ENCODE measurements at regions of chr10 and their contacts with region 1.

Region 1: GRCh38 chr10:51389415-51390321 is 309.7 kb downstream of the CSTF2T start:
- DNase-seq: peak in 6 of 10 donors; percentile 23 to 91 (median 60)

Region 2: DNA sequence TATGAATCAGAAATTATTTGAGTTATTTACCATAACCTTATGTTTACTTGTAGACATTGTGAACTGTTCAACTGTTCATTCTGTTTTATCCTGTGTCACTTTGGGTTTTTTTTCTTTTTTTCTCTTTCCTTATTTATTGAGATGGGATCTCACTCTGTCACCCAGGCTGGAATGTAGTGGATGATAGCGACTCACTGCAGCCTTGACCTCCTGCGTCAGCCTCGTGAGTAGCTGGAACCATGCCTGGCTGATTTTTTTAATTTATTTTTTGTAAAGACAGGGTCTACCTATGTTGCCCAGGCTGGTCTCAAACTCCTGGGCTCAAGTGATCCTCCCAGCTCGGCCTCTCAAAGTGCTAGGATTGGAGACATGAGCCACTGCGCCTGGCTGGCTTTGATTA is 212.7 kb after region 1 on chr10:
- intact Hi-C with region 1: no loop called
- DNase-seq: no peak

Region 3: DNA sequence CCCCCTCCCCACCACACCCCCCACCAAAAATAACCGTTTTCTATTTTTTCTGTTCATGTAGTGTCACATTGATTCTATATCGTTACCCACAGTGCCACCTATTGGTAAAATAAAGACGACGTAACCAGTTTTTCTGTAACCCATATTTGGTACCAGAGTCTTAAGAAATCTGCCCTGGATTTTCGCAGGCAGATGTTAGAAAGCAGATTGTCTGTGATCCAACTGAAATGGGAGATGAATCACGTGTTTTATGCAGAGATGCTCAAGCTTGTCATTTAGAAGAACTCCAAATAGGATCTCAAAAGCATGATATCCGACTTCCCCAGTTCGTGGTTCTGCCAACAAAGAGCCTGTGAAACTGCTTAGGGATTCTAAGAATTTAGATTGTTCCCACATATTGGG is 570.8 kb after region 1 on chr10:
- intact Hi-C with region 1: loop called (anchors 2 kb)
- DNase-seq: no peak